MCF 10A (cell line): ENCODE measurements at regions of chr9 and their contacts with region 1.

Region 1: DNA sequence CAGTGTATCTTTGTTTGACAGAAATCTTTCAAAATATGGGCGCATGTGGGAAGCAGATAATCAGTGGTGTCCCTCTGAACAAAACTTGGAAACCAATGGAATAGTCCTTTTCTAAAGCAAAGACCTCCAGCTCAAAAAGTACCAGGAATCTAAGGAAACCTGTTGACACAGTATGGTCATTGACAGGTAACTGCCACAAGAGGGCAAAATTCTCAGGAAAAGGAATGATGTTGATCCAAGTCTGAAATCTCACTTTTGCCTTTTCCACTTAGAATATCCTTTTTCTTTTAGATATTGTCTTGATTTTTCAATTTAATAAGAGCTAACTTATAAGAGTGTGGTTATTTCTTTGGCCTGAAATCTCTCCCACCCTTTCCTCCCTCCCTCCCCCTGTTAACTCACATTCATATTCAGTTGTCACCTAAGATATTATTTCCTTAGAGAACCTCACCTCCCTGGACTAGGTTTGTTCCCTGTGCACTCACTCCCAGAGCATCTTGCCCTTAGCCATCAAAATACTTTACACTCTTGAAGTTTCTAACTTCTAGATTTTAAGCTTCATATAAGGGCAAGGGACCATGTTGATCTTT is 59.0 kb upstream of the BARX1 start:
- DNase-seq: peak; percentile 62
- H3K4me3 Mint-ChIP-seq: no peak overlapping the region
- H3K27ac Mint-ChIP-seq: no peak overlapping the region
- H3K4me1 Mint-ChIP-seq: peaks cover 7% of the 10 kb centered on the region
- H3K27me3 Mint-ChIP-seq: no peaks in the 10 kb centered on the region
- CTCF ChIP-seq: peak; percentile 47

Region 2: GRCh38 chr9:93682232-93682968 is 331.8 kb before region 1 on chr9:
- CTCF ChIA-PET with region 1: interaction called, 11 read pairs
- POLR2A ChIA-PET with region 1: interaction called, 3 read pairs
- intact Hi-C with region 1: no loop called
- DNase-seq: peak; percentile 61
- H3K4me3 Mint-ChIP-seq: no peak overlapping the region
- H3K27ac Mint-ChIP-seq: no peak overlapping the region
- H3K4me1 Mint-ChIP-seq: peaks cover 8% of the 10 kb centered on the region
- H3K27me3 Mint-ChIP-seq: no peaks in the 10 kb centered on the region
- CTCF ChIP-seq: peak; percentile 81

Region 3: GRCh38 chr9:93942161-93942560 is 72.0 kb before region 1 on chr9:
- CTCF ChIA-PET with region 1: no interaction called
- POLR2A ChIA-PET with region 1: no interaction called
- intact Hi-C with region 1: no loop called
- DNase-seq: peak; percentile 16
- H3K4me3 Mint-ChIP-seq: no peak overlapping the region
- H3K27ac Mint-ChIP-seq: no peak overlapping the region
- H3K4me1 Mint-ChIP-seq: peaks cover 6% of the 10 kb centered on the region
- H3K27me3 Mint-ChIP-seq: peaks cover 70% of the 10 kb centered on the region
- CTCF ChIP-seq: no peak

Region 4: GRCh38 chr9:94002316-94003140 is 11.6 kb before region 1 on chr9:
- CTCF ChIA-PET with region 1: interaction called, 69 read pairs
- POLR2A ChIA-PET with region 1: no interaction called
- intact Hi-C with region 1: no loop called
- DNase-seq: peak; percentile 70
- H3K4me3 Mint-ChIP-seq: no peak overlapping the region
- H3K27ac Mint-ChIP-seq: no peak overlapping the region
- H3K4me1 Mint-ChIP-seq: peaks cover 6% of the 10 kb centered on the region
- H3K27me3 Mint-ChIP-seq: peaks cover 12% of the 10 kb centered on the region
- CTCF ChIP-seq: peak; percentile 66

Region 5: DNA sequence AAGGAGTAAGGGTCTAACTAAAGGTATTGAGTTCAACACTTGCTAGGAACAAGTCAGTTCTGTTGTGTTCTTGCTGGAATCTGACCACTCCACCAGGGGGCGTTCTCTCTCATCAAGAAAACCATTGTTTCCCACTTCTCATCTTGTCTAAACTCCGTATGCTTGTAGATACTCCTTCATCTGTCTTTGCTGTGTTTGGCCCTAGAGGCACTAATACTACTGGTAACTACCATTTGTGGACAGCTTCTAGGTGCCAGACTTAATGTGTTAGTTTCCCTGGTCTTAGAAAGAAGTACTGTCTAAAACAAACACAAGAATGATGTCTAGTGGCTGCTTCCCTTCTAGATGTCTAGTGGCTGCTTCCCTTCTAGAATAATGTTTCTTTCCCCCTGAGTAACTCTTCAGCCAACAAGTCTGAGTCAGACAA is 51.4 kb after region 1 on chr9:
- CTCF ChIA-PET with region 1: interaction called, 34 read pairs
- POLR2A ChIA-PET with region 1: no interaction called
- intact Hi-C with region 1: loop called (anchors 2 kb)
- DNase-seq: peak; percentile 91
- H3K4me3 Mint-ChIP-seq: no peak overlapping the region
- H3K27ac Mint-ChIP-seq: peak overlapping the region; percentile 71
- H3K4me1 Mint-ChIP-seq: peaks cover 10% of the 10 kb centered on the region
- H3K27me3 Mint-ChIP-seq: no peaks in the 10 kb centered on the region
- CTCF ChIP-seq: peak; percentile 71

Region 6: GRCh38 chr9:94173632-94174031 is 159.5 kb after region 1 on chr9:
- CTCF ChIA-PET with region 1: interaction called, 9 read pairs
- POLR2A ChIA-PET with region 1: interaction called, 4 read pairs
- intact Hi-C with region 1: loop called (anchors 5 kb)
- DNase-seq: no peak
- H3K4me3 Mint-ChIP-seq: peak overlapping the region; percentile 83
- H3K27ac Mint-ChIP-seq: no peak overlapping the region
- H3K4me1 Mint-ChIP-seq: peaks cover 44% of the 10 kb centered on the region
- H3K27me3 Mint-ChIP-seq: no peaks in the 10 kb centered on the region
- CTCF ChIP-seq: no peak

Region 7: GRCh38 chr9:94213511-94214124 is 199.5 kb after region 1 on chr9:
- CTCF ChIA-PET with region 1: interaction called, 243 read pairs
- POLR2A ChIA-PET with region 1: interaction called, 32 read pairs
- intact Hi-C with region 1: loop called (anchors 1 kb)
- DNase-seq: peak; percentile 85
- H3K4me3 Mint-ChIP-seq: no peak overlapping the region
- H3K27ac Mint-ChIP-seq: no peak overlapping the region
- H3K4me1 Mint-ChIP-seq: peaks cover 11% of the 10 kb centered on the region
- H3K27me3 Mint-ChIP-seq: no peaks in the 10 kb centered on the region
- CTCF ChIP-seq: peak; percentile 72

Region 8: DNA sequence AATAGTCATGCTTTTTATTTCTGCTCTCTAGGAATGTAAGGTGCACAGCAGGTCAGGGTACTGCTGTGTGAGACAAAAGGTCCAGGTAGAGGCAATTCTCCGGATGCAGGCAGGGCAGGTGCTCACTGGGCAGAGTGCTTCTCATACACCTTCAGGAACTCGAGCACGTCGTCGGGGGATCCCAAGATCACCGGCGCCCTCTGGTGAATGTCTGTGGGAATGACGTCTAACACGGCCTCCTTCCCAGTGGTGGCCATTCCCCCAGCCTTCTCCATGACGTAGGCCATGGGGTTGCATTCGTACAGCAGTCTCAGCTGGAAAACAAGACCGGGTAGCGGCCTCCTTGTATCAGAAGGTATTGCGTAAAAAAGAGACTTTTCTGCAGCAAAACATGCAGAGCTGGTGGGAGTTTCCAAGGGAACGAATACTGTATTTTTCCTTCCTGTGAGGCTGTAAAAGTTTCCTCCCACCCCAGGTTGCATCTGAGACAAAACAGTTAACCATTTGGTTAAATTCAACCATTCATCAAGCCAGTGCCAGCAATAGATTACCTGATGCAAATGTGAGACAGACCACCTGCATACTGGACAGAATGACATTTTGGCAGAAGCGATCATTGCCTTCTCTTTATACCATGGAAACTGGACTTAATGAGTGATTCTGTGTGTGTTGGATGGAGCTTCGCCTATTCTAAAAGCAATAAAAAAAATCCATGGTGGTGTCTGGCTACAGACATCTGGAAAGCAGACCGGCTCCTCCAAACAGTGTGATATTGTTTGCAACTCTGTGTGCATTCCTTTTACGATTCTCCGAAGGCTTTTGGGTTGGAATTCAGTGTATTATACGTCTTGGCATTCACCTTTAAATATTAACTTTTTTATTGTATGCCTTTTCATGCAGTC is 589.4 kb after region 1 on chr9:
- CTCF ChIA-PET with region 1: no interaction called
- POLR2A ChIA-PET with region 1: no interaction called
- intact Hi-C with region 1: loop called (anchors 1 kb)
- DNase-seq: peak; percentile 77
- H3K4me3 Mint-ChIP-seq: no peak overlapping the region
- H3K27ac Mint-ChIP-seq: no peak overlapping the region
- H3K4me1 Mint-ChIP-seq: no peaks in the 10 kb centered on the region
- H3K27me3 Mint-ChIP-seq: peaks cover 12% of the 10 kb centered on the region
- CTCF ChIP-seq: peak; percentile 62